ENCODE measurements at regions of chr1 and their contacts with region 1.

Region 1: GRCh38 chr1:41812051-41812450 is 106.7 kb downstream of the HIVEP3 start:
- DNase-seq: no peak
- H3K4me3 ChIP-seq: no peak overlapping the region
- H3K27ac ChIP-seq: no peak overlapping the region
- H3K4me1 ChIP-seq: peaks cover 7% of the 10 kb centered on the region
- H3K27me3 ChIP-seq: no peaks in the 10 kb centered on the region
- CTCF ChIP-seq: no peak
- POLR2A ChIP-seq: no peak

Region 2: DNA sequence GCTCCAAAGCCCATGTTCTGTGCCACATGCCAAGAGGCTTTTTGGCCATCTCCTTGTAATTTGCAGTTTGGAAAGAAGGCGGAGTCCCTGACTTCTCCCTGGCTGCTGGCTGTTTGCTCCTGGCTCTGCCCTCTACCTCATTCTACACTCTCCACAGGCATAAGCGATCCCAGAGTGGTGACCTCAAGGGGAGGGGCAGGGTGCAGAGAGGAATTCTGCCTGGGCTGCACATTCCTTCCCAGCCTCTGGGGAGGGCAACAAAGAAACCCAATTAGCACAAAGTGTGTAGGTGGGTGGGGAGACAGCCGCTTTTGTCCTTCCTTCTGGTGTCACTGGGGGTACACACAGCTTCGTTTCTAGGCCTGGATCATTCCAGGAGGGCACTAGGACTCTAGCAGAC is 11.4 kb after region 1 on chr1:
- intact Hi-C with region 1: no loop called
- DNase-seq: no peak
- H3K4me3 ChIP-seq: no peak overlapping the region
- H3K27ac ChIP-seq: no peak overlapping the region
- H3K4me1 ChIP-seq: peaks cover 9% of the 10 kb centered on the region
- H3K27me3 ChIP-seq: no peaks in the 10 kb centered on the region
- CTCF ChIP-seq: no peak
- POLR2A ChIP-seq: no peak

Region 3: GRCh38 chr1:41856944-41857285 is 44.9 kb after region 1 on chr1:
- intact Hi-C with region 1: loop called (anchors 5 kb)
- DNase-seq: no peak
- H3K4me3 ChIP-seq: no peak overlapping the region
- H3K27ac ChIP-seq: no peak overlapping the region
- H3K4me1 ChIP-seq: peaks cover 19% of the 10 kb centered on the region
- H3K27me3 ChIP-seq: no peaks in the 10 kb centered on the region
- CTCF ChIP-seq: no peak
- POLR2A ChIP-seq: no peak

Region 4: DNA sequence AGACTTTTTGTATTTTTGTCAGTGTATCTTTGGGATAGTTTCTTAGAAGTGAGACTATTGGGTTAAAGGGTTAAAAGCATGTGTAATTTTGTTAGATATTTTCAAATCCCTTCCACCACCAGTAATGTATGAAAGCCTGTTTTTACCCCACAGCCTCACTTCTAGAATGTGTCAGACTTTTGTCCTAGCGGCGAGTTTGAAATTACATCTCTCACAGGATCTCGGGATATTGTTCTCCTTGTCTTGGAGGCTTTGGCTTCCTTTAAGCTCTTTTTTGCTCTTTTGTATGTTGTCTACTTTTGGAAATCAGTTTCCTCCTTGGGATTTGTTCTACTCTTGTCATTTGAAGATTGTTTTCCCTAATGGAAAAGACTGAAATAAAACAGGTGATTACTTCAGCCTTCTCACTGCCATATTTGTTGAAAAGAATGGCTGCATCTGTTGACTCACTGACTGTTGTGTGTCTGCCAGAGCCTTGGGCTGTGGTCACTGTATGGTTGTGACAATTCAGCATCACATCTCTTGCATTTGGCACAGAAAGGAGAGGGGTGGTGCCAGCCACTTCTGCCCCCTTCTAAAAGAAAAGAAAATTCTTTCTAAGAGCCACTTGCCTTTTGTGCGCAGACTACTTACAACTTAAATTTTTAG is 1917.9 kb after region 1 on chr1:
- intact Hi-C with region 1: no loop called
- DNase-seq: no peak
- H3K4me3 ChIP-seq: no peak overlapping the region
- H3K27ac ChIP-seq: no peak overlapping the region
- H3K4me1 ChIP-seq: no peaks in the 10 kb centered on the region
- H3K27me3 ChIP-seq: no peaks in the 10 kb centered on the region
- CTCF ChIP-seq: no peak
- POLR2A ChIP-seq: no peak

Measured in vagina (tissue), 2 donors.